SK-N-SH (cell line): ENCODE measurements at regions of chr17 and their contacts with region 1.

Region 1: DNA sequence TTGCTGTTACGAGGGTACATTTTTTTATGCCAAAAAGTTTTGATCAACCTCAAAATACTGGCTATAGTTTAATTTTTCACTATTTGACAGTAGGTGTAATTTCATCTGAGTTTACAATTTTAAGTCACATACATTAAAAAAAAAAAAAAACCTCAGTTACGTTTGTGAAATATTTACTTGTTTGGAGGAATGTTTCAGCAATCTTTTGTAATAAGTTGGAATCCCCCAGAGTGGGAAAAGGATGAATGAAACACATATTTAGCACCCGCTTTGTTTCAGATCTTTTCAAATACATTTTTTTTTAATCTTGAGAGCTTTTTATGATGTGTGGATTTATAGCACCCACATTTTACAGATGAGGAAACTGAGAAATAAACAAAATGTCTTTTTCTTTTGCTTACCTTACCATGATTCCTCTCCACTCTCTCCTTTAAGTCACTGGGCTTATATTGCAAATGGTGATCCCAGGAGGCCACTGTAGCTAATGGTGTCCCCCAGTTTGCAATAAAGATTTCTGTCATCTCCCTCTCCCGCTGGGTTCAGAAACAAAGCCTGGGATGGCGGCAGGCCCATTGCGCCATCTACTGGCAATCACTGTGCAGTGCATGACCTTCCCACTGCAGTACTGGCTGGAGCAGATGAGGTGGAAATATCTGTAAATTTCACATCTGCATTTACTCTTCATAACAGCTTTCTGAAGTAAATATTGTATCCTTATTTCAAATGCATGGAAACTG is 27.7 kb downstream of the TBC1D3B start:
- DNase-seq: peak; percentile 77
- H3K4me3 ChIP-seq: peak overlapping the region in 1 of 2 experiments; percentile 23; a peak in 1 of 4 replicates
- H3K27ac ChIP-seq: no peak overlapping the region
- H3K4me1 ChIP-seq: no peaks in the 10 kb centered on the region
- H3K27me3 ChIP-seq: peaks cover 14% of the 10 kb centered on the region; the same call in 1 of the 2 replicates
- CTCF ChIP-seq: peak; percentile 98
- EP300 ChIP-seq: no peak
- RAD21 ChIP-seq: peak; percentile 81

Region 2: DNA sequence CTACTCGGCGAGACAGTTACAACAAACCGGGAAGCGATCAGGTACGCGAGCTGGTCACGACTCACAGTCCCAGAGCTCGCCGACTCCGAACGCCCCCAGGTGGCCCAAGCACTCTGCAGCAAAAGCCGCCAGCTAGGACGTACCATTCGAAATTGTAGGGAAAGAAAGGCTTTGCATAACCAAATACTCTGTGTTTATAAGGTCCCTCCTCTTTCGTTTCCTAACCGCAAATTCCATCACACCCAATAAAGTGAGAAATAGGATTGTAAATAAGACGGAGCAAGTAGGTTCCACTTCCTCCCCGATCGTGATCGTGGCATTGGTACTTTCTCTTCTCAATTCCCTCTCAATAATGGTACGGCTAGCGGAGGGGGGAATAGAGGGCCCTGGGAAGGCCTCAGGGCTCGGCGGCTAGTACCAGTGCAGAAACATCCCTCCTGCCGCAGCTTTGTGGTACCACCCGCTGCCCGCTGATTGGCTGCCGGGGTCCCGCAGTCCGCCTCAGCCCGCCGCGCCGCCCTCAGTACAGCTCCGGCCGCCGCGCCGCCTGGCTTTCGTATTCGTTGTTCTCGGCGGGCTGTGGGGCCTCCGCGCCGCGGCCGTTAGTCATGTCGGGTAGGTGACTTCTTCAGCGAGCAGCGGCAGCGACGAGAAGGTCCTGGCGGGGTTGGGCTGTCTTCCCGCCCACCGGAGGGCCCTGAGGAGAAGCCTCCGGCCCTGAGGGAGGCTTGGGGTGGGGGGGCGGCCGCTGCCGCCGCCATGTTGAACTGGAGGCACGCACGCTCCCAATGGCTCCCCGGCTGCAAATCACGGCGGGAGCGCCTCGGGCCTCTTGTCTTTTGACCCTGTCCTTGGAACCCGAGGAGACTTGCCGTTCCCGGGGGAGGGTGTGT is 339.5 kb before region 1 on chr17 and contains the start of gene TAF15:
- CTCF ChIA-PET with region 1: no interaction called
- POLR2A ChIA-PET with region 1: no interaction called
- DNase-seq: peak; percentile 95
- H3K4me3 ChIP-seq: peak within 1 kb of the TSS; percentile 77 to 80
- H3K27ac ChIP-seq: peak within 1 kb of the TSS; percentile 75 to 99
- H3K4me1 ChIP-seq: peaks cover 0 to 21% of the 10 kb centered on the region in 2 experiments; a peak in 3 of 4 replicates
- H3K27me3 ChIP-seq: no peaks in the 10 kb centered on the region
- CTCF ChIP-seq: peak; percentile 78
- EP300 ChIP-seq: peak in 1 of 2 experiments; percentile 25; a peak in 1 of 4 replicates
- RAD21 ChIP-seq: peak; percentile 52
- polyA plus RNA-seq, gene TAF15: 67.5 and 78.0 TPM in 2 replicates

Region 3: DNA sequence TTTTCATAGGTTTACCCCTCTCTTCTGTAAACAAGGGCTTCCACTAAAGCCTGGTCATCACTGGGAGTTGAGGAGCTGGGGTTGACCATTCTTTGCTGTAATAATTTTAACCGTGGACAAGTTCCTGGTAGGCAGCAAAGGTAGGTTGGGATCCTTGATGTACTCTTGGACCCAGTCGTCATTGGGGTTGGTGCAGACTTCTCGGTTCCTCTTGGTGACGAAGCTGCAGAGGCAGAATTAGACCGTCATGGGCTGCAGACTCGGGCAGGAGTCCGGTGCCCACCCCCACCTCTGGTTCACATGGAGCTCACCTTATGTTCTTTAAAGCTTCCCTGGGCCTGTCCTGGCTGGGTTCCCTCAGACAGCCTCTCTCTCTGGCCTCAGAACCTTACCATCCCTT is 171.2 kb before region 1 on chr17:
- CTCF ChIA-PET with region 1: interaction called, 59 read pairs
- POLR2A ChIA-PET with region 1: no interaction called
- DNase-seq: no peak
- H3K4me3 ChIP-seq: no peak overlapping the region
- H3K27ac ChIP-seq: no peak overlapping the region
- H3K4me1 ChIP-seq: no peaks in the 10 kb centered on the region
- H3K27me3 ChIP-seq: peaks cover 27% of the 10 kb centered on the region; the same call in 1 of the 2 replicates
- CTCF ChIP-seq: no peak
- EP300 ChIP-seq: no peak
- RAD21 ChIP-seq: no peak

Region 4: GRCh38 chr17:36133602-36134236 is 15.0 kb before region 1 on chr17:
- CTCF ChIA-PET with region 1: interaction called, 15 read pairs
- POLR2A ChIA-PET with region 1: no interaction called
- DNase-seq: no peak
- H3K4me3 ChIP-seq: no peak overlapping the region
- H3K27ac ChIP-seq: no peak overlapping the region
- H3K4me1 ChIP-seq: no peaks in the 10 kb centered on the region
- H3K27me3 ChIP-seq: no peaks in the 10 kb centered on the region; the same call in 1 of the 2 replicates
- CTCF ChIP-seq: no peak
- EP300 ChIP-seq: no peak
- RAD21 ChIP-seq: no peak